Endothelial cell of umbilical vein (primary cell): ENCODE measurements at regions of chr3 and their contacts with region 1.

Region 1: GRCh38 chr3:149160754-149161300 is 31.4 kb downstream of the HPS3 start:
- DNase-seq: no peak
- H3K4me3 ChIP-seq: no peak overlapping the region
- H3K27ac ChIP-seq: no peak overlapping the region
- H3K4me1 ChIP-seq: no peaks in the 10 kb centered on the region
- H3K27me3 ChIP-seq: no peaks in the 10 kb centered on the region
- CTCF ChIP-seq: no peak
- POLR2A ChIP-seq: no peak

Region 2: DNA sequence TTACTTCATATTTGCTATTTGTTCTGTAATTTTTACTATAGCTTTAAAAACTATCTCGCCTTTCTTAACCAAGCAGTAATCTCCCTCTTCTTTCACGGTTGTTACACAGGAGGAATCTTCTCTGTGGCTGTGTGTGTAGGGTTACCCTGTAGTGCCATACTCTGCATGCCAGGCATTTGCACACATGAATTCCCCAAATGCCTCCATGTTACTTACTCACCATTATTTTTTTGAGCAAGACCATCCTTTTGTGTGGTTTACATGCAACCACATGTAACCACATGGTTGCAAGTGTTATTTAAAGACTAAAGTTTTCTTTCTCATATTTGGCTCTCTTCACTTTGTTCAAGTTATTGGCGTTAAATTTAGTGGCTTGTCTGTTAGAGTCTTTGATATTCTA is 14.1 kb after region 1 on chr3:
- CTCF ChIA-PET with region 1: interaction called, 4 read pairs
- POLR2A ChIA-PET with region 1: interaction called, 10 read pairs
- dilution Hi-C with region 1: no loop called
- intact Hi-C with region 1: no loop called
- DNase-seq: no peak
- H3K4me3 ChIP-seq: no peak overlapping the region
- H3K27ac ChIP-seq: no peak overlapping the region
- H3K4me1 ChIP-seq: peaks cover 16% of the 10 kb centered on the region
- H3K27me3 ChIP-seq: no peaks in the 10 kb centered on the region
- CTCF ChIP-seq: no peak
- POLR2A ChIP-seq: no peak